ENCODE measurements at regions of chr9 and their contacts with region 1.

Region 1: GRCh38 chr9:85237478-85237877 is 504.3 kb downstream of the AGTPBP1 start:
- DNase-seq: no peak
- ATAC-seq: no peak
- H3K4me3 ChIP-seq: no peak overlapping the region
- H3K27ac ChIP-seq: no peak overlapping the region
- H3K4me1 ChIP-seq: no peaks in the 10 kb centered on the region
- H3K27me3 ChIP-seq: no peaks in the 10 kb centered on the region
- CTCF ChIP-seq: no peak
- EP300 ChIP-seq: no peak
- POLR2A ChIP-seq: no peak
- RAD21 ChIP-seq: no peak

Region 2: GRCh38 chr9:85178474-85178873 is 59.0 kb before region 1 on chr9:
- CTCF ChIA-PET with region 1: no interaction called
- POLR2A ChIA-PET with region 1: no interaction called
- in situ Hi-C with region 1: loop called (anchors 10 kb)
- intact Hi-C with region 1: no loop called
- DNase-seq: no peak
- ATAC-seq: no peak
- H3K4me3 ChIP-seq: no peak overlapping the region
- H3K27ac ChIP-seq: no peak overlapping the region
- H3K4me1 ChIP-seq: no peaks in the 10 kb centered on the region
- H3K27me3 ChIP-seq: no peaks in the 10 kb centered on the region
- CTCF ChIP-seq: no peak
- EP300 ChIP-seq: no peak
- POLR2A ChIP-seq: no peak
- RAD21 ChIP-seq: no peak